Activated CD8-positive, alpha-beta T cell treated with anti-CD3 and anti-CD28 coated beads, Interleukin-2, amount 10 ng/mL, durations not matched to agents 7 days and 5 days (primary cell): ENCODE measurements at regions of chr2 and their contacts with region 1.

Region 1: GRCh38 chr2:65056215-65057053 is at the start of gene CEP68:
- DNase-seq: peak; percentile 98
- ATAC-seq: peak; percentile 95
- H3K4me3 Mint-ChIP-seq: peak within 1 kb of the TSS; percentile 95
- H3K27ac Mint-ChIP-seq: peak within 1 kb of the TSS; percentile 88
- H3K4me1 Mint-ChIP-seq: peaks cover 58% of the 10 kb centered on the region
- H3K27me3 Mint-ChIP-seq: no peaks in the 10 kb centered on the region
- total RNA-seq, gene CEP68: 8.1 to 9.7 TPM

Region 2: GRCh38 chr2:65024149-65024829 is 32.1 kb before region 1 on chr2:
- CTCF ChIA-PET with region 1: no interaction called
- POLR2A ChIA-PET with region 1: no interaction called
- DNase-seq: no peak
- ATAC-seq: no peak
- H3K4me3 Mint-ChIP-seq: no peak overlapping the region
- H3K27ac Mint-ChIP-seq: no peak overlapping the region
- H3K4me1 Mint-ChIP-seq: peaks cover 6% of the 10 kb centered on the region
- H3K27me3 Mint-ChIP-seq: no peaks in the 10 kb centered on the region

Region 3: DNA sequence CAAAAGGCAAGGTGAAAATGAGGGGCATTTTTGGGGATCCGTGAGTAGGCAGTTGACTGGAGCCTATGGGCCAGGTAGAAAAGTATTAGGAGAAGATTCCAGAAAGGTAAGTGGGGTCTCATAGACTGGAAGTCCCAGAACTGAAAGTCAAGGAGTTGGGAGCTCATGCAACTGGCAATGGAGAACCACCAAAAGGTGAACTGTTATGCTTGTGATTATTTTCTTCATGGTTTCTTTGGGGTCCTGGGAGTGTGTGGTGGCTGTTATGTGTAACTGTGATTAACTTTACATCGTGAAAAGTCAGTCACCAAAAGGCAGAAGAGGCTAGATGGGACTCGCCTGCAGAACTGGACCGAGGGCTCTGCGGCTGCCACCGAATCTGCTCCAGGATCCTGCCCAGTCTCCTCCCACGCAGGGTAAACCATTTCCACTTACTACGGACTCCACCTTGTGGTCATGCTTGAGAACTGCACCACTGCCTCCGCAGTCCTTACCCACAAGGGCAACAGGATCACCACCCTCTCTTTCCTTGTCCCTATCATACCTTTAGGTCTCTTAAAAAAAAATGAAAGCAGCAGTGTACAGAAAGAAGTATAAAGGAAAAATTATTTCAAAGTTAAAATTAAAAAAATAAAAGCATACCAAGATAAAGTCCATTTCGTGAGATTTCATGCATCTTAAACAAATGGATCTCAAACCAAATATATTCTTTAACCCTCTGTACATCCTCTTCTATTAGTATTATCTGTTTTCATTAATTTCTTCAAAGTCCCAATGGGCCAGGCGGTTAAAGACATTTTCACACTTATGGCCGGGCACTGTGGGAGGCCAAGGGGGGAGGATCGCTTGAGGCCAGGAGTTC is 15.8 kb before region 1 on chr2:
- CTCF ChIA-PET with region 1: interaction called, 23 read pairs
- POLR2A ChIA-PET with region 1: interaction called, 4 read pairs
- DNase-seq: peak; percentile 87
- ATAC-seq: peak; percentile 94
- H3K4me3 Mint-ChIP-seq: peak overlapping the region; percentile 50
- H3K27ac Mint-ChIP-seq: no peak overlapping the region
- H3K4me1 Mint-ChIP-seq: peaks cover 16% of the 10 kb centered on the region
- H3K27me3 Mint-ChIP-seq: no peaks in the 10 kb centered on the region

Region 4: GRCh38 chr2:65164426-65164891 is 108.0 kb after region 1 on chr2:
- CTCF ChIA-PET with region 1: interaction called, 10 read pairs
- POLR2A ChIA-PET with region 1: no interaction called
- DNase-seq: no peak
- ATAC-seq: no peak
- H3K4me3 Mint-ChIP-seq: no peak overlapping the region
- H3K27ac Mint-ChIP-seq: no peak overlapping the region
- H3K4me1 Mint-ChIP-seq: peaks cover 21% of the 10 kb centered on the region
- H3K27me3 Mint-ChIP-seq: no peaks in the 10 kb centered on the region

Region 5: DNA sequence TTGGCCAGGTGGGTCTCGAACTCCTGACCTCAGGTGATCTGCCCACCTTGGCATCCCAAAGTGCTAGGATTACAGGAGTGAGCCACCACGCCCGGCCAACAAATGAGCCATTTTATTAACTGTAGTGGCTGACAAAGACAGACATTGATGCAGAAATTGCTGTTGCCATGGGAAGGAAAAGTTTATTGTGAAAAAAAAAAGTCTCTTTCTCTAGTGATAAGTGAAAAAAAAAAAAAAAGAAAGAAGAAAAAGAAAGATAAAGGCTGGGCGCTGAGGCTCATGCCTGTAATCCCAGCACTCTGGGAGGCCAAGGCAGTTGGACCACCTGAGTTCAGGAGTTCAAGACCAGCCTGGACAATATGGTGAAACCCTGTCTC is 113.3 kb after region 1 on chr2:
- CTCF ChIA-PET with region 1: interaction called, 10 read pairs
- POLR2A ChIA-PET with region 1: no interaction called
- DNase-seq: no peak
- ATAC-seq: no peak
- H3K4me3 Mint-ChIP-seq: no peak overlapping the region
- H3K27ac Mint-ChIP-seq: no peak overlapping the region
- H3K4me1 Mint-ChIP-seq: no peaks in the 10 kb centered on the region
- H3K27me3 Mint-ChIP-seq: no peaks in the 10 kb centered on the region